ENCODE measurements at regions of chr19 and their contacts with region 1.

Region 1: GRCh38 chr19:36132489-36132891 is 7.4 kb upstream of the CAPNS1 start:
- DNase-seq: peak; percentile 100
- H3K4me3 Mint-ChIP-seq: no peak overlapping the region
- H3K27ac Mint-ChIP-seq: peak overlapping the region; percentile 71
- H3K4me1 Mint-ChIP-seq: peaks cover 34% of the 10 kb centered on the region
- H3K27me3 Mint-ChIP-seq: no peaks in the 10 kb centered on the region
- CTCF ChIP-seq: no peak

Region 2: GRCh38 chr19:36032251-36033104 is 100.0 kb before region 1 on chr19 and contains the start of gene CLIP3:
- CTCF ChIA-PET with region 1: no interaction called
- POLR2A ChIA-PET with region 1: no interaction called
- intact Hi-C with region 1: no loop called
- DNase-seq: no peak
- H3K4me3 Mint-ChIP-seq: no peak within 1 kb of the TSS
- H3K27ac Mint-ChIP-seq: no peak within 1 kb of the TSS
- H3K4me1 Mint-ChIP-seq: no peaks in the 10 kb centered on the region
- H3K27me3 Mint-ChIP-seq: no peaks in the 10 kb centered on the region
- CTCF ChIP-seq: no peak
- total RNA-seq, gene CLIP3: 1.2 and 2.3 TPM in 2 replicates

Region 3: GRCh38 chr19:36054119-36054732 is 78.3 kb before region 1 on chr19 and contains the start of gene THAP8:
- CTCF ChIA-PET with region 1: interaction called, 6 read pairs
- POLR2A ChIA-PET with region 1: interaction called, 10 read pairs
- intact Hi-C with region 1: no loop called
- DNase-seq: peak; percentile 99
- H3K4me3 Mint-ChIP-seq: peak within 1 kb of the TSS; percentile 86
- H3K27ac Mint-ChIP-seq: peak within 1 kb of the TSS; percentile 73
- H3K4me1 Mint-ChIP-seq: peaks cover 4% of the 10 kb centered on the region
- H3K27me3 Mint-ChIP-seq: no peaks in the 10 kb centered on the region
- CTCF ChIP-seq: peak; percentile 40
- total RNA-seq, gene THAP8: 4.0 and 4.7 TPM in 2 replicates

Region 4: GRCh38 chr19:36151144-36152018 is 18.9 kb after region 1 on chr19:
- CTCF ChIA-PET with region 1: interaction called, 8 read pairs
- POLR2A ChIA-PET with region 1: interaction called, 29 read pairs
- intact Hi-C with region 1: no loop called
- DNase-seq: no peak
- H3K4me3 Mint-ChIP-seq: no peak overlapping the region
- H3K27ac Mint-ChIP-seq: peak overlapping the region; percentile 17
- H3K4me1 Mint-ChIP-seq: peaks cover 29% of the 10 kb centered on the region
- H3K27me3 Mint-ChIP-seq: no peaks in the 10 kb centered on the region
- CTCF ChIP-seq: no peak

Region 5: GRCh38 chr19:36163813-36164212 is 31.3 kb after region 1 on chr19:
- CTCF ChIA-PET with region 1: interaction called, 150 read pairs
- POLR2A ChIA-PET with region 1: interaction called, 43 read pairs
- intact Hi-C with region 1: no loop called
- DNase-seq: no peak
- H3K4me3 Mint-ChIP-seq: no peak overlapping the region
- H3K27ac Mint-ChIP-seq: no peak overlapping the region
- H3K4me1 Mint-ChIP-seq: no peaks in the 10 kb centered on the region
- H3K27me3 Mint-ChIP-seq: no peaks in the 10 kb centered on the region
- CTCF ChIP-seq: no peak

Region 6: GRCh38 chr19:36169084-36169760 is 36.7 kb after region 1 on chr19:
- CTCF ChIA-PET with region 1: interaction called, 150 read pairs
- POLR2A ChIA-PET with region 1: interaction called, 43 read pairs
- intact Hi-C with region 1: loop called (anchors 1 kb)
- DNase-seq: no peak
- H3K4me3 Mint-ChIP-seq: no peak overlapping the region
- H3K27ac Mint-ChIP-seq: peak overlapping the region; percentile 3
- H3K4me1 Mint-ChIP-seq: no peaks in the 10 kb centered on the region
- H3K27me3 Mint-ChIP-seq: no peaks in the 10 kb centered on the region
- CTCF ChIP-seq: no peak